ENCODE measurements at regions of chr3 and their contacts with region 1.

Region 1: DNA sequence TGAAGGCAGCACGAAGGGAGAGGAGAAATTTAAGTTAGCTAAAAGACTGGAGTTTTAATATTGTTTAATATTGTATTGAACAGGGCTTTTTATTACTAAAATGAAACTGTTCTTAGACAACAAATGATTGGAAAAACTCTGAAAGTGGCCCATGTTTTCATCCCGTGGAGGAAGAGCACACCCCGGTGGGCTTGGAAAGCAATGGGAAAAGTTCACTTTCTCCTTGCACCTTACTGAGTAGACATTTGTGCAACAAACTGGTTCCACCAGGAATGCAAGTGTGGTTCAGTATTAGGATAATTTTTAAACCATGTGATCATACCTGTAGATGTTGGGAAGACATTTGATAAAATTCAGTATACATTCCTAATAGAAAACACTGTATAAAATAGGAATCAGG is 8.2 kb upstream of the ESYT3 start:
- DNase-seq: peak in 2 of 5 donors; percentile 49 to 65
- H3K4me3 ChIP-seq: no peak overlapping the region
- H3K27ac ChIP-seq: no peak overlapping the region
- H3K4me1 ChIP-seq: no peaks in the 10 kb centered on the region
- H3K27me3 ChIP-seq: peaks cover 2% of the 10 kb centered on the region
- CTCF ChIP-seq: peak; percentile 45

Region 2: DNA sequence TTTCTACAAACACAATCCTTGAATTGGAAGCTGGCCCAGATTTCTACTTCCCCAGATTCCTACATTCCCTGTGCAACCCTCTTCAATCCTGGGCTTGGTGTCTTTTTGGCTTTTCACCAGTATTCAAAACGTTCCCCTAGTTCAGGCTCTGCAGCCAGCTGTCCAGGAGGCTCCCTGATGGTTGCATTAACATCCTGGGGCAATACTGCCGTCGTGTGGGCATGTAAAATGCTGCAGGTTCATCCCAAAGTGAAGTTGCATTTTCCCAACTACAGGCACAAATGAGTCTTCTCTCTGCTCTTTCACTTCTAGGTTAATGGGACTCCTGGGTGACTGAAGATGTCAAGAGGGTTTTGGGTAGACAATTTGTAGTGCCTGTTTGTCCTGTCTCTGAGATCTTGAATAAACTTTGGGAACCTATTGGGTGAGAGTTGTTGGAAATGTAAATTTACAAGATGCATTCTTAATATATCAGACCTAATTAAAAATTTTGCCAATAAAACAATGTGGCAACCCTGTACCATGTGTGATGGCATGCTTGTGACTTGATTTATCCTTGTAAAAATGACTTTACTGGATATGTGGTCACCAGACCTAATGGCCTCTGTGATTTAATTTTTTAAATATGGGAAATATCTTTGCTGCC is 633.5 kb before region 1 on chr3:
- intact Hi-C with region 1: no loop called
- DNase-seq: peak in 3 of 5 donors; percentile 22 to 48 (median 43)
- H3K4me3 ChIP-seq: no peak overlapping the region
- H3K27ac ChIP-seq: no peak overlapping the region
- H3K4me1 ChIP-seq: no peaks in the 10 kb centered on the region
- H3K27me3 ChIP-seq: no peaks in the 10 kb centered on the region
- CTCF ChIP-seq: peak; percentile 69

Region 3: DNA sequence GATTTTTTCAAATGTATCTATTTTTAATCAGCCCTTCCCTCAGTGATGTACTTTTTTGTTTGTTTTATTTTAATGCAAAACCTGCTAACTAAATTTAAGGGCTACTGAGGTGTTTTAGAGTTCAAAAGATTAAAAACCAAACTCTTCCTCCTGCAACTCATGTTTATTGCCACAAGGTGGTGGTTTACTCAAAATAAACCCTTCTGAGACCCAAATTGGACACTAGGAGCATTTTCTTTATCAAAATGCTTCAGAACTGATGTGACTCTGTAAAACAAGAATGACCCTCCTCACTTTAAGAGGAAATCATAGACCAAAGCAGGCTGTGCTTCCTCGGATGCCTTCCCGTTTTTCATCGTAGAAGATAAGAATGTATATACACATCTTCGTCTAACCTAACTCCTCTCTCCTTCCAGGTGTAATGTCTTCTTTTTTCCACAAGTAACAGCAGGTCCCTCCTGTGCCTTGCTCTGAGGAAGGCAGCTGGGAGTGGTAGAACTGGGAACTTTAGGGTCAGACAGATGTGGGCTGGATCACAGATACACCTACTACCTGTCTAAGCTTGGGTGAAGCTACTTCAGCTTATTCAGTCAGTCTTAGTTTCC is 93.7 kb before region 1 on chr3:
- intact Hi-C with region 1: loop called (anchors 10 kb)
- DNase-seq: peak in 2 of 5 donors; percentile 53 to 59
- H3K4me3 ChIP-seq: no peak overlapping the region
- H3K27ac ChIP-seq: no peak overlapping the region
- H3K4me1 ChIP-seq: peaks cover 0 to 5% (median 0%) of the 10 kb centered on the region in 3 donors
- H3K27me3 ChIP-seq: no peaks in the 10 kb centered on the region
- CTCF ChIP-seq: peak; percentile 62

Measured in kidney (tissue), 22 donors.